ENCODE measurements at regions of chr4 and their contacts with region 1.

Region 1: DNA sequence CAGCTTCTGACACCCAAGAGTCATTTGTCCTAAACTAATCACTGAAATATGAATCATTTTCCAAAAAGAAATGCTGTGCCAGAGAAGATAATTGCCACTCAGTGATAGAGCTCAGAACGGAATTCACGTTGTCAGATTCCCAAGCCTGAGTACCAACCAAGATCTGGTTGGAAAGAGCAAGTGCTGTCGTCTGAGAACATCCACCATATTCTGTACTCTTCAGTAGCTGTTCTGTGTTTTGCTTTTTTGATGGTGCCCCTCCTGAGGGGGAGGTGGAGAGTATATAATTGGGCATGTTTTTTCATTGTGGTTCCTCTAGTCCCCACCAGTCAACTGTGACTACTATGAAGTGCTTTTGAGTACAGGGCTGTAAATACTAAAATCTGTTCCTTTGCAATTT is 13.2 kb downstream of the RUFY3 start:
- DNase-seq: no peak
- H3K4me3 ChIP-seq: no peak overlapping the region
- CTCF ChIP-seq: no peak
- POLR2A ChIP-seq: no peak

Region 2: DNA sequence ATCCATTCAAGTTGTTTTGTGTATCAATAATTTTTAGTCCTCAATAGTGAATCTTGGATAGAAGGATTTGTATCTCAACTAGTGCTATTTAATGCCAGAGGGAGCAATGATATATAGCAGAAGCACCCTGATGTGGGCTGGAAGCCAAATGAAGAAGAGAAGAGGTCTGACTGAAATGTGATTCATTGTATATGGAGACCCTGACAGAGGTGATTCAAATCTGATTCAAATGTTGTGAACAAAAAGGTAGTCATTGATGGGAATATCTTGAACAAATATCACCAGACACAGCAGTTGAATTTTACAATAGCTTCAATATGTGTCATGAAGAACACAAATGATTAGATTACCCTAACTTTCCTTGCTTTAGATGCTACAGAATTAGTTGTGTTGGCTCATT is 947.1 kb before region 1 on chr4:
- intact Hi-C with region 1: no loop called
- DNase-seq: no peak
- H3K4me3 ChIP-seq: no peak overlapping the region
- CTCF ChIP-seq: no peak
- POLR2A ChIP-seq: no peak

Region 3: GRCh38 chr4:69874516-69874915 is 860.5 kb before region 1 on chr4:
- intact Hi-C with region 1: loop called (anchors 5 kb)
- DNase-seq: no peak
- H3K4me3 ChIP-seq: no peak overlapping the region
- CTCF ChIP-seq: no peak
- POLR2A ChIP-seq: no peak

Region 4: GRCh38 chr4:70778888-70779422 is 44.0 kb after region 1 on chr4:
- intact Hi-C with region 1: no loop called
- DNase-seq: no peak
- H3K4me3 ChIP-seq: no peak overlapping the region
- CTCF ChIP-seq: no peak
- POLR2A ChIP-seq: no peak

Measured in lower leg skin (tissue), 4 donors.